Breast epithelium (tissue), 4 donors: ENCODE measurements at regions of chr18 and their contacts with region 1.

Region 1: GRCh38 chr18:65659912-65660311 is 90.9 kb upstream of the CDH7 start:
- DNase-seq: no peak
- H3K4me3 ChIP-seq: no peak overlapping the region
- H3K27ac ChIP-seq: no peak overlapping the region
- H3K4me1 ChIP-seq: no peaks in the 10 kb centered on the region
- H3K27me3 ChIP-seq: no peaks in the 10 kb centered on the region
- CTCF ChIP-seq: no peak
- POLR2A ChIP-seq: no peak

Region 2: DNA sequence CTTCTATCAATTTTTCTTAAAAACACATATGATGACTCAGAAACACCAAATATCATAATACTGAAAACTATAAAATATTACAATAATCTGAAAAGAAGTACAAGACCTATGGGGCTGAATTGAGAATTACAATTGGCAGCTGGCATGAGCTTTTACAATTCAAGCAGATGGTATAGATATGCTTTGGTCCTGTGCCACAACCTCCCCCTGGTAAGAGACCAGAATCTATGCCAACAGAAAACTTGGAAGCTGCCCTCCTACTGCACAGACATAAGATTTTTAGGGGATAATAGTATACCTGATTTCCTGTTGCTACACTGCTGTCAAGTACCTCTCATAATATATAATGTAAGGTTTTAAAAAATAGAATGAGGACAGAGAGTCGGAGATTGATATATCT is 44.1 kb after region 1 on chr18:
- intact Hi-C with region 1: no loop called
- DNase-seq: no peak
- H3K4me3 ChIP-seq: no peak overlapping the region
- H3K27ac ChIP-seq: no peak overlapping the region
- H3K4me1 ChIP-seq: no peaks in the 10 kb centered on the region
- H3K27me3 ChIP-seq: no peaks in the 10 kb centered on the region
- CTCF ChIP-seq: no peak
- POLR2A ChIP-seq: no peak

Region 3: GRCh38 chr18:66874812-66875474 is 1215.0 kb after region 1 on chr18:
- intact Hi-C with region 1: loop called (anchors 5 kb)
- DNase-seq: no peak
- H3K4me3 ChIP-seq: no peak overlapping the region
- H3K27ac ChIP-seq: no peak overlapping the region
- H3K4me1 ChIP-seq: no peaks in the 10 kb centered on the region
- H3K27me3 ChIP-seq: no peaks in the 10 kb centered on the region
- CTCF ChIP-seq: no peak
- POLR2A ChIP-seq: no peak